Activated CD8-positive, alpha-beta T cell treated with anti-CD3 and anti-CD28 coated beads for 36 hours (primary cell): ENCODE measurements at regions of chr6 and their contacts with region 1.

Region 1: GRCh38 chr6:151690768-151691562 is 116.5 kb upstream of the ESR1 start:
- DNase-seq: peak; percentile 64
- ATAC-seq: peak; percentile 91
- H3K4me3 Mint-ChIP-seq: peak overlapping the region; percentile 64
- H3K27ac Mint-ChIP-seq: peak overlapping the region; percentile 69
- H3K4me1 Mint-ChIP-seq: peaks cover 22% of the 10 kb centered on the region
- H3K27me3 Mint-ChIP-seq: no peaks in the 10 kb centered on the region
- CTCF ChIP-seq: no peak

Region 2: GRCh38 chr6:151757506-151758245 is 66.7 kb after region 1 on chr6:
- CTCF ChIA-PET with region 1: interaction called, 6 read pairs
- POLR2A ChIA-PET with region 1: no interaction called
- intact Hi-C with region 1: loop called (anchors 1 kb)
- DNase-seq: peak; percentile 59
- ATAC-seq: peak; percentile 93
- H3K4me3 Mint-ChIP-seq: no peak overlapping the region
- H3K27ac Mint-ChIP-seq: peak overlapping the region; percentile 87
- H3K4me1 Mint-ChIP-seq: peaks cover 20% of the 10 kb centered on the region
- H3K27me3 Mint-ChIP-seq: no peaks in the 10 kb centered on the region
- CTCF ChIP-seq: no peak